CD8-positive, alpha-beta memory T cell (primary cell): ENCODE measurements at regions of chr2 and their contacts with region 1.

Region 1: DNA sequence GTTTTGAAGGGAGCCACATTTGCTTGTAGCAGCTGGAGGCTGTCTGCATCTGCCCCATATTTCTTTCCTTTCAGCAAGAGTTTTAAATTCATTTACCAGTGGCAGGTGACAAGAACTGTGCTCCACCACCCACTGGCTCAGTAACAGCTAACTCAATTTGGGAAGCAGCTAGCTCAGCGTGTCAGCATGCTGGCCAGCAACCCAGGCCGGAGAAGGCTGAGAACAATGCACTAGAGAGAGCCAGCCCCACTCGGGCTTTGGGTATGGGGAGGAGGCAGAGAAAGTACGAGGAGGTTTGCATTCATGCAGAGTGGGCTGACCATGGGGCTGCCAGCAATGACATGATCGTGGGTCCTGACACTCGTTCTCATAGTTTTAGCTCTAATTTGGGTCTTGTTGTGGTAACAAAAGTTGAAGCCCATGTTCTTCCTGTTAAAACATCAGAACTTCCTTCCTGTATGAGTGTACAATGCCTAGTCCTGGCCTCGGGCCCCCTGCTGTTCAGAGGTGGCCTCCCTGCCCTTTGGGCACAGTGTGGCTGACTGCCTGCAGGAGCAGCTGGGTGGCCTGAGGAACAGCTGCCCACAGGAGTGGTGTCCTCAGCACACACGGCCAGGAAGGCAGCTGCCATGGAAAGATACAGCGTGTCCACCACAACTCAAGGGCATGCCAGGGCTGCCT is 23.0 kb downstream of the CDC42EP3 start:
- DNase-seq: peak; percentile 29 to 73 (median 43)
- H3K4me3 ChIP-seq: peak overlapping the region; percentile 33
- H3K4me3 Mint-ChIP-seq: peak overlapping the region; percentile 63 to 88 (median 83)
- H3K27ac ChIP-seq: peak overlapping the region; percentile 49
- H3K27ac Mint-ChIP-seq: peak overlapping the region; percentile 92 to 98 (median 95)
- H3K4me1 ChIP-seq: peaks cover 82% of the 10 kb centered on the region
- H3K4me1 Mint-ChIP-seq: peaks cover 93 to 98% (median 98%) of the 10 kb centered on the region in 3 donors
- H3K27me3 ChIP-seq: no peaks in the 10 kb centered on the region
- H3K27me3 Mint-ChIP-seq: peaks cover 0 to 3% of the 10 kb centered on the region in 2 donors

Region 2: DNA sequence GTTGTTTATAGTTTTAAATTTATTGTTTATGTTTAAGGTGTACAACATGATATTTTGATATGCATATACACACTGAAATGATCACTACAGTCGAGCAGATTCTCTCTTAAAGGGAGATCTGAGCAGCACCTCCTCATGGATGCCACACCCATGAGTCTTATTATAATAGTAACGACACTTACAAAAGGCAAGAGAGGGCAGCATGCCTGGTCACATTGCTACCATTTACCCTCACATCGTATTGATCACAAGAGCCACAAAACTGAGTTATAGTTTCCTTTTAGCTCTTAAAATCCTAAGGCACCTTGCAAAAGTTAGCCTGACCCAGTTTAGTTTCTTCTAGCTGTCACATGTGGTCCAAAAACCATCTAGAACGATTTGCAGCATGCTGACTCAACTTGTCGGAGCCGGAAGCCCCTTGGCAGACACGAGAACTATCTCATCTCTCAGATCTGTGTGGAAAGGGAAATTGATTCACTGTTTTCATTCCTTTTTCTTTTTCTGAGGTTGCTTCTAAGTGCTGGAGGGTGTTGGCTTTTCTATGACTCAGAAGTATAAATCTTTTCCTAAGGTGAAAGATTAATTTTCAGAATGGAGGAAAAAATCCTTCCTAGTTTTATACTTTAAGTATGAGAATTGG is 62.4 kb before region 1 on chr2:
- CTCF ChIA-PET with region 1: interaction called, 15 read pairs
- POLR2A ChIA-PET with region 1: interaction called, 3 read pairs
- DNase-seq: peak; percentile 60 to 84 (median 71)
- H3K4me3 ChIP-seq: peak overlapping the region; percentile 29
- H3K4me3 Mint-ChIP-seq: peak overlapping the region; percentile 24 to 91 (median 79)
- H3K27ac ChIP-seq: peak overlapping the region; percentile 51
- H3K27ac Mint-ChIP-seq: peak overlapping the region; percentile 91 to 100 (median 95)
- H3K4me1 ChIP-seq: peaks cover 75% of the 10 kb centered on the region
- H3K4me1 Mint-ChIP-seq: peaks cover 90 to 97% (median 97%) of the 10 kb centered on the region in 3 donors
- H3K27me3 ChIP-seq: no peaks in the 10 kb centered on the region
- H3K27me3 Mint-ChIP-seq: no peaks in the 10 kb centered on the region

Region 3: DNA sequence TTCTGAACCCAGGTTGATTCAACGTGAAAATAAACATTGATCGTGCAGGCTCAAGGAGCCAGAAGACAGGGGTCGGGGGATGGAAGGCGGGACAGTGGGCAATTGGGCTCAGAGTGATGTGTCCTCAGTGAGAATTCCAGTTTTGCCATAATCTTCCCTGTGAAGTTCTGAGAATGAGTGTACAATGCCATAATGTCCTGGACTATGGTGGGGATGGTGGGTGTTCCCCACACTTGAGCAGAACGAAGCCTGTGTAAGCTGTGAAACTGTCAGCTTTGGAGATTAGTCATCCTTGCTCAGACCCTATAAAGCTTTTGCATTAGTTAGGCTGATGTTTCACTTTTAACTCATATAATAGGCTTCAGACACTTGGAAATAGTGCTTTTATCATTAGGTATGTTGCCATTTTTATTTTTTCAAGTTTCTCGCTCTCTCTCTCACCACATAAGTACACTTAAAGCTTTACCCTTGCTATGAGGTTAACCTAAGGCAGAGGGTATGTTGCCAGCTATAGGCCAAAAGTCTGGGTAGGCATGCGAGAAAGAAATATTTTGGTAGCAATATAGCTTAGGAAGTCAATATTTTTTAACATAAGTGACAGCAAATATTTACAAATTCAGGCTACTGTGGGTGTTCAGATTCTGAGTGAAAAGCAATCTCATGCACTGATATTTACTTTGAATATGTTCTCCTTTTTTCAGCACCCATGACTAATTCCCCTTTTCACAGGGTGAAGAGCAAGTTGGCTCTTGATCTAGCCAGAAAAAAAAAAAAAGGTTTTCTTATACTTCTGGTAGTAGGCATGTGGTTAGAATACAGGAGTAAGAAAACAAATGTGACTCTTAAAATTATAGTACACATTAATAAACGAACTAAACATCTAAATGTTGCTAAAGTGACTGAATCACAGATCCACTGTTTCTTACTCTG is 24.2 kb before region 1 on chr2:
- CTCF ChIA-PET with region 1: interaction called, 11 read pairs
- POLR2A ChIA-PET with region 1: interaction called, 8 read pairs
- DNase-seq: peak in 2 of 5 donors; percentile 37 to 55
- H3K4me3 ChIP-seq: no peak overlapping the region
- H3K4me3 Mint-ChIP-seq: peak overlapping the region; percentile 7 to 83 (median 76)
- H3K27ac ChIP-seq: peak overlapping the region; percentile 8
- H3K27ac Mint-ChIP-seq: peak overlapping the region; percentile 88 to 98 (median 96)
- H3K4me1 ChIP-seq: peaks cover 59% of the 10 kb centered on the region
- H3K4me1 Mint-ChIP-seq: peaks cover 74 to 91% (median 84%) of the 10 kb centered on the region in 3 donors
- H3K27me3 ChIP-seq: no peaks in the 10 kb centered on the region
- H3K27me3 Mint-ChIP-seq: no peaks in the 10 kb centered on the region

Region 4: GRCh38 chr2:37672104-37672869 is 23.8 kb after region 1 on chr2:
- CTCF ChIA-PET with region 1: interaction called, 11 read pairs
- POLR2A ChIA-PET with region 1: interaction called, 9 read pairs
- DNase-seq: peak; percentile 54 to 81 (median 64)
- H3K4me3 ChIP-seq: peak overlapping the region; percentile 74
- H3K4me3 Mint-ChIP-seq: peak overlapping the region; percentile 88 to 95 (median 91)
- H3K27ac ChIP-seq: peak overlapping the region; percentile 58
- H3K27ac Mint-ChIP-seq: peak overlapping the region; percentile 82 to 98 (median 91)
- H3K4me1 ChIP-seq: peaks cover 30% of the 10 kb centered on the region
- H3K4me1 Mint-ChIP-seq: peaks cover 42 to 52% (median 45%) of the 10 kb centered on the region in 3 donors
- H3K27me3 ChIP-seq: no peaks in the 10 kb centered on the region
- H3K27me3 Mint-ChIP-seq: no peaks in the 10 kb centered on the region

Region 5: GRCh38 chr2:37740164-37740739 is 91.8 kb after region 1 on chr2:
- CTCF ChIA-PET with region 1: no interaction called
- POLR2A ChIA-PET with region 1: no interaction called
- DNase-seq: no peak
- H3K4me3 ChIP-seq: no peak overlapping the region
- H3K4me3 Mint-ChIP-seq: no peak overlapping the region
- H3K27ac ChIP-seq: no peak overlapping the region
- H3K27ac Mint-ChIP-seq: no peak overlapping the region
- H3K4me1 ChIP-seq: no peaks in the 10 kb centered on the region
- H3K4me1 Mint-ChIP-seq: peaks cover 0 to 4% (median 0%) of the 10 kb centered on the region in 3 donors
- H3K27me3 ChIP-seq: no peaks in the 10 kb centered on the region
- H3K27me3 Mint-ChIP-seq: no peaks in the 10 kb centered on the region

Region 6: DNA sequence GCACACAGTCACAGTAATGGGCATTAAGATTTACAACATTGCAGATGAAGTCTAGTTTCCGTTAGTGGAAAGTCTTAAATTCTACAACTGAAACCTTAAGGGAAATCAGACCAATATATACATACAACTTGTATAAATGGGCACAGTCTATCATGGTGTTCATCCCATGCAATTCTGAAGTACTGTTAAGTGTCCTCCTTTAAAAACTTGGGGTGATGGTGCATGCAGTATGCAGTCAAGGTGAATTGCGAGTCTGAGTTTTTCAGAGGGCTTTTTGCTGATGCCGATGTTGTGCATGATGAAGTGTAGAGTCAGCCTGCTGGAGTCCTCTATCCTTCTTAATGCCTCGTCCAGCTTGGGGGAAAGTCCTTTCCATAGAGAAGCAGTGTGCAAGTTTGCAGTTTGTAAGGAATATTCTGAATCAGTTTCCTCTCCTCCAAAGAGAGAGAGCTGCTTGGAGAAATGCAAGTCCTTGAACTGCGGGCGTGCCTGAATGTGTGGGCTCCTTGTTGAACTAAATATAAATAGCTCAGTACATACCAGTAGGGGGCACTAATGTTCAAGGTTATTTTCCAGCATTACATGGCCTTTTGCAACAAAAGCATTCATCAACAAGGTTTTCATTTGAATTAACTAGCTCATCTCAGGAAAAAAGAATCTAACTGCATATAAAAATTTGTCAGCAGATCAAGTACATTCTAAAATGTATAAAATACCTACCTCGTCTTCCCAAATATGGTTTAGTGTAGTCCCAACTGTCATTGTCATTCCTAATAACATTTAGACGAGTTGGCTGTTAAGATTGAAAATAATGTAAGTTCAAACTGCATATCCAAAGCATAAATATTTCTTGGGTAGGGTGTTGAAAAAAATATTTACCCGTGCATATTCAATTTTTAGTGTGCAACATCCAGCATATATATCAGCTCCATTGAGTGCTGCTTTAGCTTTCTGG is 933.0 kb after region 1 on chr2:
- CTCF ChIA-PET with region 1: no interaction called
- POLR2A ChIA-PET with region 1: no interaction called
- DNase-seq: peak in 3 of 5 donors; percentile 63 to 73 (median 66)
- H3K4me3 ChIP-seq: no peak overlapping the region
- H3K4me3 Mint-ChIP-seq: no peak overlapping the region
- H3K27ac ChIP-seq: no peak overlapping the region
- H3K27ac Mint-ChIP-seq: peak overlapping the region in 7 of 8 donors; percentile 9 to 92 (median 56)
- H3K4me1 ChIP-seq: peaks cover 8% of the 10 kb centered on the region
- H3K4me1 Mint-ChIP-seq: peaks cover 31 to 64% (median 64%) of the 10 kb centered on the region in 3 donors
- H3K27me3 ChIP-seq: no peaks in the 10 kb centered on the region
- H3K27me3 Mint-ChIP-seq: no peaks in the 10 kb centered on the region